AG04449 (cell line): ENCODE measurements at regions of chr19 and their contacts with region 1.

Region 1: DNA sequence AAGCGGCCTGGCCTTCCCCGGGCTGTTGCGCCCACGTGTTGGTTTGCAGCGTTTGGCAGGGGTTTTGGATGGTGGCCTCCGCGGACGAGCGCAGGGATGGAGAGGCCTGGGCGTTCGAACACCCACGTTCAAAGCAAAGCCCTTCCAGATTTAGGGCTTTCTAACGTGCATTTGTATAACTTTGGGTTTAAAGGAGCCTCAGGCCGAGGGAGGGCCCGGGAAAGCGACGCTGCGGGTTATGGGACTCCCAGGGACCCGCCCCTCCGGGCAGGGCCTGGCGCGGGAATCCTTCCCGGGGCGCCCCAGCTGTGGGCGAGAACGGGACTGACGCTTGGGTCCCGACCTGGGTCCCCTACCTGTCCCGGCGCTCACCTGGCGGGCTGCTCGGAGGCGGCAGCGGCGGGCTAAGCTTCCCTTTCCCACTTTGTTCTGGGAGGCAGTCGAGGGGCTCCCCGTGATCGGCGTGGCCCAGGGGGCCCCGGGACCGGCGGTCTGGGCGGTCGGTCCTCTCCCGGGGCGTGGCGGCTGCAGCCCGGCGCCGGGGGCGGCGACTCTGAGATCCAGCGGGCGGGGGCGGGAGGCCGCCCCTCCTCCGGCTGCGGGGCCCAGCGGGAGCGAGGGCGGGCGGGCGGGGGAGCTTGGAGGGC is at the start of gene FBXO17:
- DNase-seq: no peak
- H3K4me3 ChIP-seq: peak within 1 kb of the TSS; percentile 75
- CTCF ChIP-seq: no peak

Region 2: GRCh38 chr19:38817081-38817677 is 158.2 kb before region 1 on chr19:
- CTCF ChIA-PET with region 1: no interaction called
- POLR2A ChIA-PET with region 1: no interaction called
- DNase-seq: no peak
- H3K4me3 ChIP-seq: no peak overlapping the region
- CTCF ChIP-seq: no peak

Region 3: DNA sequence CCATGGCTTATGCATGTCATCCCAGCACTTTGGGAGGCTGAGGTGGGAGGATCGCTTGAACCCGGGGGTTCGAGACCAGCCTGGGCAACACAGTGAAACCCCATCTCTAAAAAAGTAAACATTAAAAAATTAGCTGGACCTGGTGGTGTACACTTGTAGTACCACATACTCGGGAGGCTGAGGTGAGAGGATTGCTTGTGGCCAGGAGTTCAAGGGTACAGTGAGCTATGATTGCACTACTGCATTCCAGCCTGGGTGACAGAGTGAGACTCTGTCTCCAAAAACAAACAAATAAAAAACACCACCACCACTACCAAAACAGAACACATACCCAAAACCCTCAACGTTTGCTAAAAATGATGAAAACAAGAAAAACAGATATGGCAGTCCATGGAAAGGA is 15.7 kb before region 1 on chr19:
- CTCF ChIA-PET with region 1: interaction called, 39 read pairs
- POLR2A ChIA-PET with region 1: interaction called, 3 read pairs
- DNase-seq: no peak
- H3K4me3 ChIP-seq: no peak overlapping the region
- CTCF ChIP-seq: no peak

Region 4: DNA sequence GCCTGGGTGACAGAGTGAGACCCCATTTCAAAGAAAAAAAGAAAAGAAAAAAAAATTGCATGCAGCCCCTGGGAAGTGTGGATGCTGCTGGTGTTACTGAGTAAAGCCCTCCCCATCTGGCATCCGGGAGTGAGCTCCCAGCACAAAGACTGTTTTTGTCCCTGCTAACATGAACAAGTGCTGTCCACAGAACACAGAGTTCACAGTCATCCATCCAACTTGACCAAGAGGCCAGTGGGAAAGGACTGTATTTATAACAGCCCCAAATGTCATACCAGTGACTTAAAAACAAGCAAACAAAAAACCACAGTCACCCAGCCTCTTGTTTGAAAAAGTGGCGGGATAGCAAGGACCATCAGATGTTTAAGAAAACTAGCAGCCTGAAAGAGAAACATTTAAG is 10.6 kb before region 1 on chr19:
- CTCF ChIA-PET with region 1: interaction called, 39 read pairs
- POLR2A ChIA-PET with region 1: no interaction called
- DNase-seq: no peak
- H3K4me3 ChIP-seq: no peak overlapping the region
- CTCF ChIP-seq: no peak

Region 5: GRCh38 chr19:38989066-38989605 is 13.8 kb after region 1 on chr19:
- CTCF ChIA-PET with region 1: interaction called, 13 read pairs
- POLR2A ChIA-PET with region 1: no interaction called
- DNase-seq: no peak
- H3K4me3 ChIP-seq: no peak overlapping the region
- CTCF ChIP-seq: no peak